Ovary (tissue), 10 donors: ENCODE measurements at regions of chr4 and their contacts with region 1.

Region 1: GRCh38 chr4:184343502-184344177 is 126.0 kb upstream of the ENPP6 start:
- DNase-seq: peak; percentile 56 to 70 (median 63)
- H3K4me3 ChIP-seq: peak overlapping the region; percentile 54
- H3K27ac ChIP-seq: no peak overlapping the region
- H3K4me1 ChIP-seq: peaks cover 21% of the 10 kb centered on the region
- H3K27me3 ChIP-seq: no peaks in the 10 kb centered on the region
- CTCF ChIP-seq: no peak
- EP300 ChIP-seq: no peak
- POLR2A ChIP-seq: no peak

Region 2: GRCh38 chr4:183602557-183603027 is 741.0 kb before region 1 on chr4:
- intact Hi-C with region 1: no loop called
- DNase-seq: peak in 1 of 5 donors; percentile 48
- H3K4me3 ChIP-seq: no peak overlapping the region
- H3K27ac ChIP-seq: peak overlapping the region in 1 of 2 donors; percentile 30
- H3K4me1 ChIP-seq: no peaks in the 10 kb centered on the region
- H3K27me3 ChIP-seq: no peaks in the 10 kb centered on the region
- CTCF ChIP-seq: peak; percentile 41 to 71 (median 46)
- EP300 ChIP-seq: no peak
- POLR2A ChIP-seq: no peak

Region 3: DNA sequence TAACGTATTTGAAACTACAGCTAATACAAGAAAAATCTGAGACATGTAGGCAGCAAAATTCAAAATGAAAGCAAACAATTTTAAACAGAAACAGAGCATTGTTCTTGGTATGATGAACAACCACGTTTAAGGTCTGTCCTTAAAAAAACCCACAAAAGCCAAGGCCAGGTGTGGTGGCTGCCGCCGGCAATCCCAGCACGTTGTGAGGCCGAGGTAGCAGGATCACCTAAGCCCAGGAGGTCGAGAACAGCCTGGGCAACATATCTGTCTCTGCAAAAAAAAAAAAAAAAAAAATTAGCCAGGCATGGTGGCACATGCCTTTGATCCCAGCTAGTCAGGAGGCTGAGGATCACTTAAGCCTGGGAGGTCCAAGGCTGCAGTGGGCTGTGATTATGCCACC is 698.3 kb before region 1 on chr4:
- intact Hi-C with region 1: no loop called
- DNase-seq: no peak
- H3K4me3 ChIP-seq: no peak overlapping the region
- H3K27ac ChIP-seq: peak overlapping the region in 1 of 2 donors; percentile 14
- H3K4me1 ChIP-seq: peaks cover 2% of the 10 kb centered on the region
- H3K27me3 ChIP-seq: no peaks in the 10 kb centered on the region
- CTCF ChIP-seq: no peak
- EP300 ChIP-seq: no peak
- POLR2A ChIP-seq: no peak

Region 4: DNA sequence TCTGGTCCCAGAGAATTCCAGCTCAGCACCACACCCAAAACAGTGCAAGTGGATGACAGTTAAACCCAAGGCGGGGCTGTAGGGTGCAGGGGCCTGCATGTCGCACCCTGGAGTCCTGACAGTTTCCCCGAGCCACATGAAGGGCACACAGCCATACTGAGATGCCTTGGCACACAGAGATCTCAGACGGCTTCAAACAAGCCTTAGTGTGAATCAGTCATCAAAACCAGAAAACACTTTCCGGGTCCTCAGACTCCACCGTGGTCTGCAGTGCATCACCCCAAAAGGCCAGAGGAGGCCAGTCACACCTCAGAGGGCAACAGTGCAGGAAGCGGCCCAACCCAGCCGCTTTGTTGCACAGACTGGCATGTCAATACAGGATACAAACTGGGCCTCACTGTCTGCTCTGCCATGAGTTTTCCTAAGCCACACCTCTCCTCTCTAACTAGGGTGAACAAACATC is 61.4 kb before region 1 on chr4:
- intact Hi-C with region 1: loop called in 1 of 4 experiments (anchors 10 kb)
- DNase-seq: no peak
- H3K4me3 ChIP-seq: no peak overlapping the region
- H3K27ac ChIP-seq: no peak overlapping the region
- H3K4me1 ChIP-seq: peaks cover 2% of the 10 kb centered on the region
- H3K27me3 ChIP-seq: no peaks in the 10 kb centered on the region
- CTCF ChIP-seq: no peak
- EP300 ChIP-seq: no peak
- POLR2A ChIP-seq: no peak

Region 5: DNA sequence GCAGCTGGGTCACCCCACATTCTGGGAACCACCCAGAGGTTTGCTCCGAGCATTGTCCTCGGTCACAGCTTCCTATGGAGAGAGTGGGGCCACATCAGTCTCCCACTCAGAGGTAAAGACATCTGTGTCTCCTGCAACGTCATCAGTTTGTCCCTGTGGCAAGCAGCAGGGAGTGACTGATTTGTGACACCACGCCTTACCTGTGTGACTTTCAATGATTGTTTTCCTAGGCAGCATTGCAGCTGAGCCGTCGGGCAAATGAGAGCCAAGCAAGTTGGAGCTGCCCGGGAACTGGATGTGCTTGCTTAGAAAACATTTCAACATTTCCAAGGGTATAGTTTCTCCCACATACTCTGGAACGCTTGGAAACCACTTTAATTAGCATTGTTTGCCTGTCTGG is 645.0 kb after region 1 on chr4:
- intact Hi-C with region 1: no loop called
- DNase-seq: no peak
- H3K4me3 ChIP-seq: no peak overlapping the region
- H3K27ac ChIP-seq: no peak overlapping the region
- H3K4me1 ChIP-seq: no peaks in the 10 kb centered on the region
- H3K27me3 ChIP-seq: no peaks in the 10 kb centered on the region
- CTCF ChIP-seq: no peak
- EP300 ChIP-seq: no peak
- POLR2A ChIP-seq: no peak